ENCODE measurements at regions of chr19 and their contacts with region 1.

Region 1: DNA sequence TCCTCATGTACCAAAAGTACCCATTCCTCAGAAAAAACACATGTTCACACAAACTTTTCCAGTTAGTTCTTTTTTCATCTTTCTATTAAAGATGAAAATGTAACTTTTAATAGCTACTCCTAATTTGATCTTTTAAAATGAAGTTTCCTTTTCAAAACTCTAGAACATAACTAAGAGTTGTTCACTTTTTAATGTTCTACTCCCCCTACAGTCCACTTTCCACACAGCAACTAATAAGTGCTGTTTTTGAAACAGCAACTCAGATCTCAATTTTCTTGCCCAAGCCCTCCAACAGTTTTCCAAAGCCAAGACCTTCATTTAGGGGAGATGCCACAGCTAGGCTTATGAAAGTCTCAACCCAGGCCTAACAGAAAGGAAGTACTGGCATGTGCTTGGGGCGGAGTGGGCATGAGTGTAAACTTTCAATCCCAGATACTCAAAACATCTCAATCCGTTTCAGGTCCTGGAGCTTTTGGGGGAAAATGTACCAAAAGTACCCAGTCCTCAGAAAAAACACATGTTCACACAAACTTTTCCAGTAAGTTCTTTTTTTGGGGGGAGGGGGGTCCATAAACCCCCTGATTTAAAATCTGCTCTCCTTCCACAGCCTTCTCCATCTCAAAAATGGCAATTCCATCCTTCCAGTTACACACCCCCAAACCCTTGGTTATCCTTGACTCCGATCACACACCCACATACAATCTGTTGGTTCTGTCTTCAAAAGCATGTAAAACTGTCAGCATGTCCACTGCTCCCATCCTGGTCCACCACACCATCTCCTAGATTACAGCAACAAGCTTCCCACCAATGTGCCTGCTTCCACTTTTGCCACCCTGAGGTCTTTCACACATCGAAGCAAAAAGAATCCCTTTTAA is 2.0 kb downstream of the FBL start:
- DNase-seq: peak; percentile 66
- H3K4me3 ChIP-seq: peak overlapping the region; percentile 90
- H3K27ac ChIP-seq: peak overlapping the region; percentile 52
- H3K4me1 ChIP-seq: peaks cover 33% of the 10 kb centered on the region
- CTCF ChIP-seq: peak; percentile 91

Region 2: GRCh38 chr19:39765091-39766076 is 78.8 kb before region 1 on chr19:
- CTCF ChIA-PET with region 1: no interaction called
- POLR2A ChIA-PET with region 1: no interaction called
- intact Hi-C with region 1: loop called (anchors 2 kb)
- DNase-seq: peak; percentile 61
- H3K4me3 ChIP-seq: no peak overlapping the region
- H3K27ac ChIP-seq: no peak overlapping the region
- H3K4me1 ChIP-seq: peaks cover 1% of the 10 kb centered on the region
- CTCF ChIP-seq: peak; percentile 98

Region 3: DNA sequence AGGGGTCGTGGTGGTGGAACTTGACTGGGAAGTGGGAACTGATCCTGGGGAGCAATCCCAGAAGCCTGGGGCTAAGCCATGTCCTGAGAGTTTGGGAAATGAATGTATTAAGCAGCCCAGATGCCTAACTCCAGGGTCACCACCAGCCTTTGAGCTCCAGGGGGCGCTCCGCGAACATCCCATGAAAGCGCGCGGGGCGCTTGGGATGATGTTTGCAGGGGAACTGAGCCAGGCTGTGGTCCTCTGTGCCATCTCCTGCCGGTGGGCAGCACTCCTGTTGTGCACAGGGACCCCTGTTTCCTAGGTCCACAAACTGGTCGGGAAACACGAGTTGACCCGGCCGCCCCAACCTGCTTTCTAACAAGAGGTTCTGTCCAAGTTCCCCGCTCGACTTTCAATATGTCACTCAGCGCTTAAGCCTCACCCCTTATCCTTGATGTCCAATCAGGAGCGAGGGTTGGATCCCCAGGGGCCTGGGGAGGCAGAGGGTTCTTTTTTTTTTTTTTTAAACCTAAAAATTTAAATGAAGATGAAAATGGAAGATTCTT is 51.1 kb before region 1 on chr19:
- CTCF ChIA-PET with region 1: interaction called, 7 read pairs
- POLR2A ChIA-PET with region 1: no interaction called
- intact Hi-C with region 1: loop called (anchors 1 kb)
- DNase-seq: peak; percentile 85
- H3K4me3 ChIP-seq: peak overlapping the region; percentile 66
- H3K27ac ChIP-seq: no peak overlapping the region
- H3K4me1 ChIP-seq: peaks cover 4% of the 10 kb centered on the region
- CTCF ChIP-seq: peak; percentile 98

Region 4: GRCh38 chr19:39906283-39906682 is 62.1 kb after region 1 on chr19:
- CTCF ChIA-PET with region 1: no interaction called
- POLR2A ChIA-PET with region 1: no interaction called
- intact Hi-C with region 1: no loop called
- DNase-seq: no peak
- H3K4me3 ChIP-seq: no peak overlapping the region
- H3K27ac ChIP-seq: no peak overlapping the region
- H3K4me1 ChIP-seq: peaks cover 6% of the 10 kb centered on the region
- CTCF ChIP-seq: no peak

Region 5: DNA sequence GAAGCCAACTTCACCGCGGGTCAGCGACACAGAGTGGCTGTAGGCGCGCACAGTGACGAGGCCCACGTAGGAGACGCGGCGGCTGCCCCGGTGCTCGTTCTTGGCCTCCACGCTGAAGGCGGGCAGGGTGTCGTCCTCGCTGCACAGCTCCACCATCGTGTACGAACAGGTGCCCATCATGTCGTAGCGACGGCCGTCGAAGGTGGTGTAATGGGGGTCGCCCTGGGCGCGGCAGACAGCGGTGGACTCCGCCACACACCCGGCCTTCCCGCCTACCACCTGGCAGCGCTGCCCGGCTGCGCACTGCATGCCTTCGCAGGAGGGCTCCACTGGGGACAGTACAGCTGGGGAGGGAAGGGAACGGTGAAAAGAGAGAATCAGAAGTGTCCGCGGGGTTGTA is 80.2 kb after region 1 on chr19:
- CTCF ChIA-PET with region 1: no interaction called
- POLR2A ChIA-PET with region 1: no interaction called
- intact Hi-C with region 1: no loop called
- DNase-seq: no peak
- H3K4me3 ChIP-seq: no peak overlapping the region
- H3K27ac ChIP-seq: no peak overlapping the region
- H3K4me1 ChIP-seq: no peaks in the 10 kb centered on the region
- CTCF ChIP-seq: no peak

Measured in OCI-LY7 (cell line).